ENCODE measurements at regions of chr7 and their contacts with region 1.

Region 1: DNA sequence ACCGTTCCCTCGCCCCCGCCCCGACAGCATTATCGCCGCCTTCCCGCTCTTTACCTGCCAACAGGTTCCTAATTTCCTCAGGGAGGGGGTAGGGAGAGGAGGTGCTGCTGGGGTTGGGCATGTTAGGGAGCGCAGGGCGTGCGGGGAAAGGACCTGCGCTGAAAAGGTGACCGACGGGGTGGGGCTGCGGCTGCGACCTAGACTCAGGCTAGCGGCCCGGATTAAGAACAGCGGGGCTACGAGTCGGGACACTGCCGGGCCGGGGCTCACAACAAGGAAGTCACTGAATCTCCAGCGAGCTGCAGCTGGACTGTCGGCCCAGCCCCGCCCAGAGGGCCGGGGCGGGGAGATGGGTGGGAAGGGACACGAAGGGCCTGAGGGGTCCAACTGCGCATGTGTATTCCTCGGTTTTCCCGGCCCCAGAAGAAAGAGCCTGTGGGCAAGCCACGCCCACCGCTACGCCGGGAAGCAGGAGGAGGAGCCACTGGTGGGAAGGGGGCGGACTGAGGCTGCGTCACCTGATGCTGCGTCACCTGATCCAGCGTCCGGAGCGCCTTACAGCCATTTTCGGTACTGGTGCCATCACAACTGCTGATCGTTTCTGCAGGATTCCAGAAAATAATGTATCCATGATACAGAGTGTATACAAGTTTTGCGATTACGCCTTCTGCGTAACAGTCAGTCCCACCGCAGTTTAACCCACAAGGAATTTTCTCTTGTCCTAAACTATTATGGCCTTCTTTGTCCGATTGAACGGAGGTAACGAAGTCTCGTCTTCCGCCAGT is at the start of gene SKAP2:
- DNase-seq: peak; percentile 100
- H3K4me3 ChIP-seq: peak within 1 kb of the TSS; percentile 68 to 89 (median 81)
- H3K27ac ChIP-seq: peak within 1 kb of the TSS; percentile 93 to 97 (median 96)
- H3K4me1 ChIP-seq: peaks cover 5 to 38% (median 31%) of the 10 kb centered on the region in 4 donors
- H3K27me3 ChIP-seq: peaks cover 0 to 4% (median 0%) of the 10 kb centered on the region in 4 donors
- CTCF ChIP-seq: peak in 1 of 3 experiments; percentile 8
- EP300 ChIP-seq: no peak
- POLR2A ChIP-seq: peak; percentile 79
- total RNA-seq, gene SKAP2: 44.2 to 47.1 (median 45.1) TPM

Region 2: GRCh38 chr7:26200444-26201246 is 663.9 kb before region 1 on chr7 and contains the start of gene HNRNPA2B1:
- intact Hi-C with region 1: loop called (anchors 5 kb)
- DNase-seq: peak; percentile 99
- H3K4me3 ChIP-seq: peak within 1 kb of the TSS; percentile 95 to 98 (median 96)
- H3K27ac ChIP-seq: peak within 1 kb of the TSS; percentile 99 to 100 (median 100)
- H3K4me1 ChIP-seq: peaks cover 46 to 56% (median 55%) of the 10 kb centered on the region in 4 donors
- H3K27me3 ChIP-seq: no peaks in the 10 kb centered on the region
- CTCF ChIP-seq: peak in 1 of 3 experiments; percentile 19
- EP300 ChIP-seq: peak; percentile 44
- POLR2A ChIP-seq: peak; percentile 100
- total RNA-seq, gene HNRNPA2B1: 158 to 220 (median 202) TPM

Region 3: GRCh38 chr7:27533652-27534081 is 669.2 kb after region 1 on chr7:
- intact Hi-C with region 1: no loop called
- DNase-seq: no peak
- H3K4me3 ChIP-seq: no peak overlapping the region
- H3K27ac ChIP-seq: no peak overlapping the region
- H3K4me1 ChIP-seq: no peaks in the 10 kb centered on the region
- H3K27me3 ChIP-seq: no peaks in the 10 kb centered on the region
- CTCF ChIP-seq: no peak
- EP300 ChIP-seq: no peak
- POLR2A ChIP-seq: no peak

Measured in esophagus muscularis mucosa (tissue), 4 donors.